ENCODE measurements at regions of chr14 and their contacts with region 1.

Region 1: DNA sequence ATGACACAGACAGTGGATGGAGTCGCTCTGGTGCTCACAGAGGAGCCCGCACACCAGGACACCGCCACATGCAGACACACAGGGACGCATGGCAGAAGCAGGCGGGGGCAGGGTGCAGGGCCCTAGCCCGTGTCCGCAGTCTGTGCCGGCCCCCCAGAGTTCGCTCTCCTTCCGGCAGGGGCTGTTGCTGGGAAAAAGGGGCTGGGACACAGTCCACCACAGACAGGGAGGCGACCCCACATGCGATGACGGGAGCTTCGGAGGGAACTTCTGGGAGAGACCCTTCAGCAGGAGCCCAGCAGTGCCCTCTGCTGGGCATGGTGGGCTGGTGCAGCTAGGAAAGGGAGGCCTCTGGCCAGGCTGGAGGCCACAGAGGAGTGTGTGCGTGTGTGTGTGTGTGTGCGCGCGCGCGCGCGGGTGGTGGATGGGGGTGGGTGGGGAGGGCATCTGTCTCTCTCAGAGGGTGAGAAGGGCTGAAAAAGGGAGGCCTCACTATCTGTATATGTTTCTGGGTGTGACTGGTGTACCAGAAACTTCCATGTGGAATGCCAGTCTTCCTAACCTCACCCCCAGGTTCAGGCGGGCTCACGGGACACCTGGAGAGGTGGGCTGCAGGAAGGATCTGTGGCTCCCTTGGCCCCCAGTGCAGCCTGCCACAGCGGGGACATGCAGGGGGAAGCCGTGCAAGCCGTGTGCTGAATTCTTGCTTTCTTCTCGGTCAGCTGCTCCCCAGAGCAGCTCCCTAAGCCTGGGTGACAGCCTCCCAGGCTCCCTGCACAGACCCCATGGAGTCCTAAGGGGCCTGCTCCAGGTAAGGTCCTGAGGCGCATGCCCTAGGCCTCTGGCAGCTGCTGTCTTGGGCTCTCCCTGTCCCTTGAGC is 60.7 kb downstream of the PLEKHG3 start:
- DNase-seq: peak; percentile 74
- H3K4me3 ChIP-seq: no peak overlapping the region
- H3K27ac ChIP-seq: peak overlapping the region; percentile 30
- H3K4me1 ChIP-seq: peaks cover 21% of the 10 kb centered on the region
- H3K27me3 ChIP-seq: no peaks in the 10 kb centered on the region
- CTCF ChIP-seq: peak; percentile 80 to 97
- POLR2A ChIP-seq: no peak

Region 2: DNA sequence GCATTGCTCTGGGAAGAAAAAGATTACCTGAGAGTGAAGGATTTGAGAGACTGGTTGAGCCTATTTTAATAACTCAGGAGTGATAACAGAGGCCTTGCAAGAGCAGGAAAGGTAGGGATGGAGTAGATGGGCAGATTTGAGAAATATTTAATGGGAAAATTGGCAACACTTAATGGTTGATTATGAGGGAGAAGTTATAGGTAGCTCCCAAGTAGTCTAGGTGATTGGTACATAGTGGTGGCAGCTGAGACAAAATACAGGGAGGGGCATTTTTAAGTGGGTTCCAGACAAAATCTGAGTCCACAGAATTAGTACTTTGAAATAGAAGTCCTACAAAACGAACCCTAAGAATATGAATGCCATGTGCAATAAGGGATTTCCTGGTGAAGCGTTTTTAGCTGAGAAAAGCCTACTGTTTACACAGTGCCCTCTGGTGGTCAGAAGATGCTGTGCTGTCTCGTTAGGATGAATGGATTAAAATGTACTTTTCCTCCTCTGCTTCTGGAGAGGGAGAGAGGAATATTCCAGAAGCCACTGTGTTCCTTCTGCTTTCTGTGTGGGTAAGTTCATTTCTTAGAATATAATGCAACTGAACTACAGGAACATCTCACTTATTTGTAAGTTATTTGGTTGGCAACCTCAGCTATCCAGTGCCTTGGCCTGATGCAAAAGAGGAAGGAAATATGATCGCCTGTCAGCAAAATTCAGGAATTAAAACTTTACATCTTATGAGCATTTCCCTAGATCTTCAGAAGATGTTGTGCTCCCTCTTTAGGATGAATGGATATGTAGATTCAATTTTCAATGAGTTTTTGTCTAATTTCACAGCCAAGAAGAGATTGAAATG is 253.8 kb before region 1 on chr14:
- CTCF ChIA-PET with region 1: no interaction called
- POLR2A ChIA-PET with region 1: no interaction called
- dilution Hi-C with region 1: no loop called
- intact Hi-C with region 1: loop called (anchors 5 kb)
- DNase-seq: peak; percentile 72
- H3K4me3 ChIP-seq: no peak overlapping the region
- H3K27ac ChIP-seq: no peak overlapping the region
- H3K4me1 ChIP-seq: peaks cover 21% of the 10 kb centered on the region
- H3K27me3 ChIP-seq: no peaks in the 10 kb centered on the region
- CTCF ChIP-seq: peak; percentile 78 to 84
- POLR2A ChIP-seq: no peak

Region 3: GRCh38 chr14:64671591-64671990 is 93.3 kb before region 1 on chr14:
- CTCF ChIA-PET with region 1: interaction called, 56 read pairs
- POLR2A ChIA-PET with region 1: no interaction called
- dilution Hi-C with region 1: no loop called
- intact Hi-C with region 1: loop called (anchors 1 kb)
- DNase-seq: peak; percentile 59
- H3K4me3 ChIP-seq: no peak overlapping the region
- H3K27ac ChIP-seq: no peak overlapping the region
- H3K4me1 ChIP-seq: no peaks in the 10 kb centered on the region
- H3K27me3 ChIP-seq: peaks cover 5 to 10% of the 10 kb centered on the region in 2 experiments
- CTCF ChIP-seq: peak; percentile 40 to 66
- POLR2A ChIP-seq: no peak

Region 4: GRCh38 chr14:64704143-64704742 is 60.6 kb before region 1 on chr14 and contains the start of gene PLEKHG3:
- CTCF ChIA-PET with region 1: interaction called, 9 read pairs
- POLR2A ChIA-PET with region 1: interaction called, 3 read pairs
- dilution Hi-C with region 1: no loop called
- intact Hi-C with region 1: loop called (anchors 2 kb)
- DNase-seq: peak; percentile 68
- H3K4me3 ChIP-seq: peak within 1 kb of the TSS; percentile 78 to 94 (median 84)
- H3K27ac ChIP-seq: peak within 1 kb of the TSS; percentile 0
- H3K4me1 ChIP-seq: peaks cover 21% of the 10 kb centered on the region
- H3K27me3 ChIP-seq: peaks cover 19 to 35% of the 10 kb centered on the region in 2 experiments
- CTCF ChIP-seq: no peak
- POLR2A ChIP-seq: no peak
- total RNA-seq, gene PLEKHG3: 6.9 and 8.0 TPM in 2 replicates

Region 5: DNA sequence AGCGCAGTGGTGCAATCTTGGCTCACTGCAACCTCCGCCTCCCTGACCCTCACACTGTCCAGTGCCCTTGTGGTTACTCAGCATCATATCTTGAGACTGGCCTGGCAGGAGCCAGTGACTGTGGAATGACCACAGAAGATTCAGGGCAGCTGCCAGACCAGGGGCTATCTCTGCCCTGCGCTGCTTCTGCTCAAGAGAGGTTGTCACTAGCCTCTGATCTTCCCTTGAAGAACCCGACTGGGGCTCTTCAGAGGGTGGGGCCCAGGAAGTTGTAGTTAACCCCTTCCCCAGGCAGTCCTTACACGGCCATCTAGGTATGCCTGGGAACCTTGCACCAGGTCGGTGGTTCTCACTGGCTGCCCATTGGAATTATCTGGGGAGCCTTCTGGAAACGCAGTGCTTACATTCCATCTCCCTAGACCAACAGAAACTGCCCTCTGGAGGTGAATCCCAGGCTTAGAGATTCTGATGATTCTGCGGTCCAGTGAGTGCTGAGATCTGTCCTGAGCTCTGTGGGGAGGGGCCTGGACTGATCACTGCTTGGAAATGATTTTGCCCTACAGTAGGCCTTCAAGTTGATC is 19.3 kb before region 1 on chr14:
- CTCF ChIA-PET with region 1: interaction called, 11 read pairs
- POLR2A ChIA-PET with region 1: no interaction called
- dilution Hi-C with region 1: no loop called
- intact Hi-C with region 1: no loop called
- DNase-seq: no peak
- H3K4me3 ChIP-seq: no peak overlapping the region
- H3K27ac ChIP-seq: no peak overlapping the region
- H3K4me1 ChIP-seq: peaks cover 6% of the 10 kb centered on the region
- H3K27me3 ChIP-seq: no peaks in the 10 kb centered on the region
- CTCF ChIP-seq: no peak
- POLR2A ChIP-seq: no peak

Measured in endothelial cell of umbilical vein (primary cell).